Common myeloid progenitor, CD34-positive (primary cell): ENCODE measurements at regions of chr1 and their contacts with region 1.

Region 1: DNA sequence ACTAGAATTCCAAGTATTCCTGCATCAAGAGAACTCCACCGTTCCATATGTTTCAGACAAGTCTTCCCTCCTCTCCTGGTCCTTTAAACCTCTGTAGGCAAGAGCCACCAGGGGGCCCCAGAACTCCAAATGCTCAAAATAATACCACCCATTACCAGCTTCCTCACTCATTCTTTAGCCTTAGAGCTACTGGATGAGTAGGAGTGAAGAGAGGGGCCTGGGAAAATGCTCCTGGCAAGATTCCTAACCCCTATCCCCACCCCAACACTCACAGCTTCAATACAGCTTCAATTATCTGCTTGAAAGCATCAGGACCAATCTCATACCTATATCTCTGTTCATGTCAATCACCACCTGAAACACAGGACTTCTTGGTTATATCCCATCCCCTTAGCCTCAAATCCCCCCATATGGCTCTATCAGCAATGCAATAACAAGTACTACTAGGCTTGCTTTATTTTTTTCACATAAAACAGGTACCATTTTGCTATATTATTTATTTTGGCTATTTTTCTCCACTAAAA is 9.7 kb downstream of the TOR1AIP2 start:
- DNase-seq: peak; percentile 52 to 68 (median 60)
- H3K4me3 ChIP-seq: no peak overlapping the region
- H3K27ac ChIP-seq: no peak overlapping the region
- H3K4me1 ChIP-seq: peaks cover 0 to 6% (median 5%) of the 10 kb centered on the region in 4 experiments
- H3K27me3 ChIP-seq: no peaks in the 10 kb centered on the region

Region 2: DNA sequence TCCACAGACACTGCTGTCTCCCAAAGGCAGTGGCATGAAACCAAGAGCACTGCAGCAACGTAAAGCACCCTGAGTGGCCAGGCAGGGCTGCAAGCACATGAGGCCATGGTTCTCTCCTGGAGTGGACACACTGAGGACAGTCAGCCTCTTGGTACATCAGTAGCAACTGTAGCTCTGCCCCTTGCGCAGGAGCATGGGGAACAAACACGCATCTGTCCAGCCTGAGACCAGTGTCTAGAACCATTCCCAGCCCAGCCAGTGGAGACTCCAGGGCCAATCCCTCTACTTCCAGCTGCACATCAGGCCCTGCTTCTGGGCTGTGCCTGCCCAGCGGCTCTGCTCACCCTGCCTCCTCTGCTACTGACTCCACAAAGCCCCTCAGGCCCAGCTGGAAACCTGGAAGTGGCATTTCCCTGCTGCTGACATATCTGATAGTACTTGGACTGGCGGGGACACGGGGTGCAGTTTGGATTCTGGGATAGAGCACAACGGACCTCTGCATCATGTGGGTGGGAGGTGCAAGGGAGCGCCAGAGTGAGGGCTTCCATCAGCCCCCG is 39.2 kb before region 1 on chr1:
- CTCF ChIA-PET with region 1: no interaction called
- POLR2A ChIA-PET with region 1: no interaction called
- DNase-seq: no peak
- H3K4me3 ChIP-seq: no peak overlapping the region
- H3K27ac ChIP-seq: no peak overlapping the region
- H3K4me1 ChIP-seq: peaks cover 0 to 4% (median under 1%) of the 10 kb centered on the region in 4 experiments
- H3K27me3 ChIP-seq: peaks cover 0 to 2% (median 0%) of the 10 kb centered on the region in 5 experiments

Region 3: GRCh38 chr1:179853102-179853501 is 14.8 kb before region 1 on chr1:
- CTCF ChIA-PET with region 1: interaction called, 10 read pairs
- POLR2A ChIA-PET with region 1: no interaction called
- DNase-seq: no peak
- H3K4me3 ChIP-seq: no peak overlapping the region
- H3K27ac ChIP-seq: no peak overlapping the region
- H3K4me1 ChIP-seq: no peaks in the 10 kb centered on the region
- H3K27me3 ChIP-seq: no peaks in the 10 kb centered on the region

Region 4: DNA sequence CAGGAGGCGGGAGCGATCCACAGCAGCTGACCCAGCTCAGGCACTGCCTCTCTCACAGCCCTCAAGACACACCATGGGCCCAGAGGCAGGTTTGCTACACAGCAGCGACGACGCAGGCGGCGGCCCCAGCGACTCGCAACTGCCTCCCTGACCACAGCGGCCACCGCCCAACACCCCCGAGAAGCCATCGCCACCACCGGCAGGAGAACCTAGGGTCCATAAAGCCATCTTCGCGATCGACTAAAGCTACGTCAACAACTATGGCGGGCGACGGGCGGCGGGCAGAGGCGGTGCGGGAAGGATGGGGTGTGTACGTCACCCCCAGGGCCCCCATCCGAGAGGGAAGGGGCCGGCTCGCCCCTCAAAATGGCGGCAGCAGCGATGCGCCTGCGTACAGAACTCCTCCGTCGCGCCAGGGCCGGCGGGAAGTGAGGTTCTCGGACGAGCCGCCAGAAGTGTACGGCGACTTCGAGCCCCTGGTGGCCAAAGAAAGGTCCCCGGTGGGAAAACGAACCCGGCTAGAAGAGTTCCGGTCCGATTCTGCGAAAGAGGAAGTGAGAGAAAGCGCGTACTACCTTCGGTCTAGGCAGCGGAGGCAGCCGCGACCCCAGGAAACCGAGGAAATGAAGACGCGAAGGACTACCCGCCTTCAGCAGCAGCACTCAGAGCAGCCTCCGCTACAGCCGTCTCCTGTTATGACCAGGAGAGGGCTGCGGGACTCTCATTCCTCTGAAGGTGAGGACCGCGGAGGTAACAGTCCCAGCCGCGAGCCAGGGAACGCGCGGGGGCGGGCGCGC is 14.6 kb after region 1 on chr1 and contains the start of gene TOR1AIP1:
- CTCF ChIA-PET with region 1: interaction called, 17 read pairs
- POLR2A ChIA-PET with region 1: interaction called, 3 read pairs
- DNase-seq: peak; percentile 99 to 100 (median 100)
- H3K4me3 ChIP-seq: peak within 1 kb of the TSS; percentile 82 to 99 (median 96)
- H3K27ac ChIP-seq: peak within 1 kb of the TSS; percentile 97 to 99
- H3K4me1 ChIP-seq: peaks cover 11 to 34% (median 30%) of the 10 kb centered on the region in 4 experiments
- H3K27me3 ChIP-seq: no peaks in the 10 kb centered on the region